Prostate gland (tissue), 2 donors: ENCODE measurements at regions of chr13 and their contacts with region 1.

Region 1: GRCh38 chr13:99436686-99437416 is 64.4 kb upstream of the TM9SF2 start:
- DNase-seq: peak; percentile 70
- H3K4me3 ChIP-seq: no peak overlapping the region
- H3K27ac ChIP-seq: no peak overlapping the region
- H3K4me1 ChIP-seq: no peaks in the 10 kb centered on the region
- H3K27me3 ChIP-seq: peaks cover 2% of the 10 kb centered on the region
- CTCF ChIP-seq: peak; percentile 98 to 100 (median 98)
- POLR2A ChIP-seq: no peak

Region 2: DNA sequence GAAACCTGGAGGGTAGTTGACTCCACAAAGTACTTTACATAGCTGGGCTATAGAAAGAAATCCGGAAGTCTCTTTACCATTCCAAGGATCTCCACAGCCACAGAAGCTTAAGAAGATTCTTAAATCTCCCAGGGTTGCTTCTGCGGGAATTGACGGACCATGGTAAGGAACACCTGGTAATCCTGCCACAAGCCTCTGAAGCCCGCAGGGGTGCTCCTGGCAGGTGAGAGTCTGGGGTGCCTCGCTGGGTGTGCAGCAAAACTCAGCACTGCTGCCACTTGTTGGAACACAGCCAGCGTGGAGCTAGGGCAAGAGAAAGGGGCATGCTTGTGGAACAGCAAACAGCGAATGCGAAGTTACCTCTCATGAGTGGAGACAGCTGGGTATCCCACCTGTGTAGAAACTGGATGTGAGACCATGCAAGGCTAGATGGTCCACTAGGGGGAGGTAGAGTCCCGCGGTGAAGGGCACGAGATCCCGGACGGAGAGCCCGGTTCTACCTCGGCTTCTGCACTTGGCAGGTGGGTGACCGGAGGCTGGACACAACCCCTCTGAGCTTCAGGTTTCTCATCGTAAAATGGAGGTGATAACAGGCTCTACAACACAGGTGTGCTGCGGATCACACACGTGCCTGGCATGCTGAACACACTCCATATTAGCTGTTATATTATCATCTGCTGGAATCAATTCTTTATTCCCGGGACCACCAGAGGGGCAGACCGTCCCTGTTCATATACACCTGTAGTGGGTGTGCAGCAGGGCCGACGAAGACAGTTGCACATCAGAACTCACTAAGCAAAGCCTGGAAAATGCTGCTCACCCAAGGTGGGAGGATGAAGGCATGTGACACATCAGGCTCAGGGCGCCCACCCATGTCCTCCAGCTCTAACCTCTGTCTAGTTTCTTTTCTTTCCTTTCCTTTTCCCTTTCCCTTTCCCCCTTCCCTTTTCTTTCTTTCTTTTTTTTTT is 260.3 kb before region 1 on chr13:
- intact Hi-C with region 1: loop called (anchors 2 kb)
- DNase-seq: peak; percentile 69
- H3K4me3 ChIP-seq: no peak overlapping the region
- H3K27ac ChIP-seq: no peak overlapping the region
- H3K4me1 ChIP-seq: no peaks in the 10 kb centered on the region
- H3K27me3 ChIP-seq: no peaks in the 10 kb centered on the region
- CTCF ChIP-seq: peak; percentile 86 to 95 (median 90)
- POLR2A ChIP-seq: no peak

Region 3: GRCh38 chr13:99269627-99270241 is 167.1 kb before region 1 on chr13:
- intact Hi-C with region 1: loop called (anchors 2 kb)
- DNase-seq: no peak
- H3K4me3 ChIP-seq: no peak overlapping the region
- H3K27ac ChIP-seq: no peak overlapping the region
- H3K4me1 ChIP-seq: no peaks in the 10 kb centered on the region
- H3K27me3 ChIP-seq: no peaks in the 10 kb centered on the region
- CTCF ChIP-seq: peak in 3 of 4 experiments; percentile 54 to 66 (median 66)
- POLR2A ChIP-seq: no peak

Region 4: DNA sequence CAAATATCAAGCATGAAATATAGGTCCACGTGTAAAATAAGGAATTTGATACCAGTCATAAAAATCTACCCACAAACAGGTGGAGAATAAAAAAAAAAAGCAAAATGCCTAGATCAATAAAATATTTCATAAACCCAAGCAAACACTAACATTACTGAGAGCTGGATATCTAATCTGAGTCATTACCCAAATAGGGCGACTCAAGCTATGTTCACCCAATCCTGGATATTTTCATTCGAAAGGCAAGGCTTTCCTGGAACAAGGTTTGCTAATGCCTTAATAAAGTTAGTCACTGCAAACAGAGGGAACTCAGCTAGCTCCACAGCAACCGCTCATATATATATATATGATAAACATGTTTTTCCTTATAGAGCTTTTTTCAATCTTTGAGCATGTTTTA is 30.9 kb after region 1 on chr13:
- intact Hi-C with region 1: no loop called
- DNase-seq: no peak
- H3K4me3 ChIP-seq: no peak overlapping the region
- H3K27ac ChIP-seq: no peak overlapping the region
- H3K4me1 ChIP-seq: no peaks in the 10 kb centered on the region
- H3K27me3 ChIP-seq: no peaks in the 10 kb centered on the region
- CTCF ChIP-seq: no peak
- POLR2A ChIP-seq: no peak